HAP-1 (cell line): ENCODE measurements at regions of chr3 and their contacts with region 1.

Region 1: DNA sequence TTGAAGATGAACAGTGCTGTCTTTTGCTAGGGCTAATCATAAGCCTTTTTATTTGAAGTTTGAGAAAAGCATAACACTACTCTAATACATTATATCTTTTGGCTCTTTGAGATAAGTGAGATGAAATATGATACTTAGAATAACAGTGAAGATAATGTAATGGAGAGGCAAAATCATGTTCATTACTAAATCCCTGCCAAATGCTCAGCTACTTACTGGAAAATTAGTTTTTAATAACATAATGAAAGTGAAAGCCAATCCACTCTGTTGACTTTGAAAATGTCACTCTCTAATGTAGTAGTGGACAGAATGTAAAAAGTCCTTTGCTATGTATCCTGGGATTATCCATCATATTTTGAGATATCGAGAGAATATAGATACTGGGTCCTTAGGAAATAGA is 35.9 kb upstream of the MYH15 start:
- DNase-seq: no peak
- H3K4me3 ChIP-seq: no peak overlapping the region
- H3K4me1 ChIP-seq: peaks cover 13% of the 10 kb centered on the region
- H3K27me3 ChIP-seq: no peaks in the 10 kb centered on the region

Region 2: GRCh38 chr3:108221911-108222852 is 324.1 kb before region 1 on chr3 and contains the start of gene IFT57:
- in situ Hi-C with region 1: no loop called
- DNase-seq: peak; percentile 95 to 98
- H3K4me3 ChIP-seq: peak within 1 kb of the TSS; percentile 57
- H3K4me1 ChIP-seq: peaks cover 22% of the 10 kb centered on the region
- H3K27me3 ChIP-seq: no peaks in the 10 kb centered on the region

Region 3: GRCh38 chr3:108489771-108490170 is 56.5 kb before region 1 on chr3:
- in situ Hi-C with region 1: loop called (anchors 5 kb)
- DNase-seq: peak; percentile 62 to 71
- H3K4me3 ChIP-seq: no peak overlapping the region
- H3K4me1 ChIP-seq: peaks cover 6% of the 10 kb centered on the region; the same call in 1 of the 2 replicates
- H3K27me3 ChIP-seq: no peaks in the 10 kb centered on the region

Region 4: GRCh38 chr3:108645364-108645763 is 99.1 kb after region 1 on chr3:
- in situ Hi-C with region 1: no loop called
- DNase-seq: no peak
- H3K4me3 ChIP-seq: no peak overlapping the region
- H3K4me1 ChIP-seq: no peaks in the 10 kb centered on the region
- H3K27me3 ChIP-seq: no peaks in the 10 kb centered on the region

Region 5: GRCh38 chr3:108705045-108705444 is 158.8 kb after region 1 on chr3:
- in situ Hi-C with region 1: no loop called
- DNase-seq: no peak
- H3K4me3 ChIP-seq: no peak overlapping the region
- H3K4me1 ChIP-seq: no peaks in the 10 kb centered on the region
- H3K27me3 ChIP-seq: no peaks in the 10 kb centered on the region